BJ (cell line): ENCODE measurements at regions of chr17 and their contacts with region 1.

Region 1: GRCh38 chr17:68794636-68795434 is 160.4 kb downstream of the ABCA8 start:
- DNase-seq: no peak
- H3K4me3 ChIP-seq: no peak overlapping the region
- H3K27me3 ChIP-seq: no peaks in the 10 kb centered on the region
- CTCF ChIP-seq: peak; percentile 49

Region 2: GRCh38 chr17:68783861-68784260 is 11.0 kb before region 1 on chr17:
- CTCF ChIA-PET with region 1: interaction called, 11 read pairs
- POLR2A ChIA-PET with region 1: no interaction called
- DNase-seq: no peak
- H3K4me3 ChIP-seq: no peak overlapping the region
- H3K27me3 ChIP-seq: no peaks in the 10 kb centered on the region
- CTCF ChIP-seq: no peak

Region 3: DNA sequence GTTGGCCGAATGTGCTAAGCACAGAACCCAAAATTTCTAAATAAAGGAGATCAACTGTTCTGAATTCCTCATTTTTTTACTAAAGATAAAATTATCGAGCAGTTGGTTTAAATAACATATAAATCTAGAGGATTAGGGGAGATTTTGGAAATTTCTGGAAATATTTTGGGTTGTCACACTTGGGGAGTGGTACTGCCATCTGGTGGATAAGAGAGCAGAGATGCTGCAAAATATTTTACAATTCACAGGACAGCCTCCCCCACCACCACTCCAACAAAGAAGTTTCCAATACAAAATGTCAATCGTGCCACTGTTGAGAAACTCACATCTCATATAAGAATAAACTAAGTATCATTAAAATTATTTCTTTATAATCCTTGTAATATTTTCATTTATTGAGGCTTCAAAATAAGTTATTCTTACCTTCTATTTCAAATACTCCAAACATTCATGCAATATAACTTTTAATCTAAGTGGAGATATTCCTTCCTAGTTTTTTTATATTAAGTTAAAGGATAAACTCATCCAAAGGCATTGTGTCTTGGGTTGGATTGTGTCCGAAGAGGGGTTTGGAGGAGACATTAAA is 177.4 kb after region 1 on chr17:
- CTCF ChIA-PET with region 1: interaction called, 14 read pairs
- POLR2A ChIA-PET with region 1: no interaction called
- DNase-seq: no peak
- H3K4me3 ChIP-seq: no peak overlapping the region
- H3K27me3 ChIP-seq: no peaks in the 10 kb centered on the region
- CTCF ChIP-seq: peak; percentile 66